Mammary epithelial cell (primary cell): ENCODE measurements at regions of chr9 and their contacts with region 1.

Region 1: DNA sequence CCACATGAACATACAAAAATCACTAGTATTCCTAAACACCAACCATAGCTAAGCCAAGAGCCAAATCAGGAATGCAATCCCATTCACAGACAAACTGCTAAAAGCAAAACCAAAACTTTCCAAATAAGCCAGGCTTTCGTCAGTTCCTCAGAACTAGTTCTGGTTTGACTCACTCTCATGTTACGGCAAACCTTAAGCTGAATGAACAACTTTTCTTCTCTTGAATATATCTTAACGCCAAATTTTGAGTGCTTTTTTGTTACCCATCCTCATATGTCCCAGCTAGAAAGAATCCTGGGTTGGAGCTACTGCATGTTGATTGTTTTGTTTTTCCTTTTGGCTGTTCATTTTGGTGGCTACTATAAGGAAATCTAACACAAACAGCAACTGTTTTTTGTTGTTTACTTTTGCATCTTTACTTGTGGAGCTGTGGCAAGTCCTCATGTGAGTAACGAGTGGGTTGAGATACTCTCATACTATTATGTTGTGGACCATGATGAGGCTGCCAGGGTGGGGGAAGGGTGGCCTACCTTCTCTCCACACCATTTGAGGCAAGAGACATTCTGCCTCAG is at the start of gene PDCD1LG2:
- DNase-seq: peak; percentile 75
- H3K4me3 ChIP-seq: peak within 1 kb of the TSS; percentile 27 to 51 (median 47)
- H3K27ac ChIP-seq: peak within 1 kb of the TSS; percentile 89
- H3K4me1 ChIP-seq: peaks cover 54% of the 10 kb centered on the region
- H3K27me3 ChIP-seq: no peaks in the 10 kb centered on the region
- CTCF ChIP-seq: no peak
- total RNA-seq, gene PDCD1LG2: 12.1 to 14.5 TPM

Region 2: DNA sequence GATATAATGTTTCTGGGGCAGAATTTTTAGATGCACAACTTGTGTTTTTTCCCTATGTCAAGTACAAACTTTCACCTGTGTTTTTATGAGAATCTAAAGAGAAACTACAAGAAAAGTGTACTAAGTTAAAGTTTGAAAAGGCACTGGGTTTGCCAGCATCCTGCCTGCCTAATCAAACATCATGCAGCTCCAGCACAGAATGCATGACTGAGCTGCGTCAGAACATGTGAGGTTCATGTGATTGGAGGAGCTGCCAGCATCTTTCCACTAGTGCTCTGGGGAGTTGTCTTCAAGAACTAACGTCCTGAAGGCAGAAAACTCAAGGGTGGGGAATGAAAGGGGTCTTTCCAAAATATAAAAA is 72.4 kb after region 1 on chr9:
- CTCF ChIA-PET with region 1: no interaction called
- dilution Hi-C with region 1: no loop called
- in situ Hi-C with region 1: no loop called
- intact Hi-C with region 1: loop called (anchors 2 kb)
- DNase-seq: peak; percentile 53
- H3K4me3 ChIP-seq: no peak overlapping the region
- H3K27ac ChIP-seq: no peak overlapping the region
- H3K4me1 ChIP-seq: peaks cover 28% of the 10 kb centered on the region
- H3K27me3 ChIP-seq: no peaks in the 10 kb centered on the region
- CTCF ChIP-seq: no peak